ENCODE measurements at regions of chr20 and their contacts with region 1.

Region 1: DNA sequence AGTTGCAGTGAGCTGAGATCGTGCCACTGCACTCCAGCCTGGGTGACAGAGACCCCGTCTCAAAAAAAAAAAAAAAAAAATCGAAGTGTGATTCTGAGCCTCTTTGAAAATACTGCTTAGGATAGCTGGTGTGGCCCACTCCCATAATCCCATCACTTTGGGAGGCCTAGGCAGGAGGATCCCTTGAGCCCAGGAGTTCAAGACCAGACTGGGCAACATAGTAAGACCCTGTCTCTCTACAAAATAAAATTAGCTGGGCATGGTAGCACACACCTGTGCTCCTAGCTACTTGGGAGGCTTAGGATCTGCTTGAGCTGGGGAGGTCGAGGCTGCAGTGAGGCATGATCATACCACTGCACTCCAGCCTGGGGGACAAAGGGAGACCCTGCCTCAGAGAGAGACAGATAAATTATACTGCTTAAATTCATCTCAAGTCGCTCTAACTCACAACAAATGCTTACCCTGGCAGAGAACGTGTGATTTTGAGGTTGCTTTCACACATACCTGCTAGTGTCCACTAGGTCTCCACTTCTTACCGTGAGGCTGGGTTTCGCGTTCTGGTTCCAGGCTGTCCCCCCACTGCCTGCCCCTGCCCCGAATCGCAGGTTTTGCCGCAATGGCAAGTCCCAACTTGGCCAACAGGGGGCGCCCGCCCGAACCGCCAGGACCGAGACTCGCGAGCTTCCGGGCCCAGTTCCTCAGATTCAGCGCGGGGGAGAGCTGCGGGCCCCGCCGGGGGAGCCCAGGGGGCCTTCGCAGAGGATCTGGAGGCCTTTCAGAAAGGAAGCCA is 12.3 kb upstream of the TMC2 start:
- DNase-seq: peak; percentile 85 to 94 (median 88)
- ATAC-seq: peak; percentile 66 to 84 (median 78)
- H3K4me3 ChIP-seq: peak overlapping the region; percentile 62 to 96 (median 80)
- H3K27ac ChIP-seq: peak overlapping the region; percentile 58 to 97 (median 89)
- H3K4me1 ChIP-seq: peaks cover 0 to 40% (median 4%) of the 10 kb centered on the region in 12 donors
- H3K27me3 ChIP-seq: no peaks in the 10 kb centered on the region
- CTCF ChIP-seq: peak; percentile 93 to 99 (median 96)
- POLR2A ChIP-seq: peak in 1 of 2 donors; percentile 62

Region 2: DNA sequence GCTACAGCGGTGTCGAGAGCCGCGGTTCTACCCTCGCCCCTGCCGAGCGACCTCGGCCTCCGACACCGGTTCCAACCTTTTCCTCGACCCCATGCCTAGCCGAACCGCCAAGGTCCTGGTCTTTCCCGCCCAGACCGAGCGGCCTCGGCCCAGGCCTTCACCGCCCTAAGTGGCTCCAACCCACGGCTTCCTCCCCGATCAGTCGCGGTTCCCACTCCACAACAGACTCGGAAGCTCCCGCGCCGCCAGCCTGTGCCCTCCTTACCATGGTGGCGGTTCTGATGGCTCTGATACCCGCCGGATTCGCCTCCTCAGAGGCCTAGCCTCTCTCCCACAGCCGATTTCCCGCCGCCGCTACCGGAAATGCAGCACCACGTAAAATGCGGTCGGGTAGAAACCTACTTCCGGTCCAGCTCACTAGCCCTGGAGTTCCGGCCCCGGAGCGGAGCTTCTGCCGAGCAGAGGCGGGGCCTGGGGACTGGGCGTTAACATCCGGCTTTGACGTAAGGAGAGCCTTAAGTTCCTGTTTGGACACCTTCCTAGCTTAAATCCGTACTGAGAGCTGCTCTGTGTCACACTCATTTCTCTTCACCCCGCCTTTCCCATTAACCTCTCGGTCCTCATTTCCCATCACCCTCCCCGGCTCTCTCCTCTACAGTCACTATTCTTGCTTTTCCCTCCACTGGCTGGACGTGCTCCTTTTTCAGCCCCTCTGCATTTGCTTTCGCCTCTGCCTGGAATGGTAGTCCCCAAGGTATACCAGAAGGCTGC is 53.5 kb before region 1 on chr20 and contains the start of gene SNRPB:
- intact Hi-C with region 1: loop called in 3 of 10 experiments (anchors 1 to 5 kb)
- DNase-seq: peak; percentile 96 to 97 (median 97)
- ATAC-seq: peak; percentile 98 to 99 (median 99)
- H3K4me3 ChIP-seq: peak within 1 kb of the TSS; percentile 69 to 94 (median 76)
- H3K27ac ChIP-seq: peak within 1 kb of the TSS; percentile 65 to 95 (median 92)
- H3K4me1 ChIP-seq: peaks cover 0 to 35% (median 16%) of the 10 kb centered on the region in 12 donors
- H3K27me3 ChIP-seq: no peaks in the 10 kb centered on the region
- CTCF ChIP-seq: no peak
- POLR2A ChIP-seq: peak; percentile 81 to 97
- total RNA-seq, gene SNRPB: 36.8 to 132 (median 75.5) TPM

Region 3: GRCh38 chr20:2643708-2644107 is 119.6 kb after region 1 on chr20:
- intact Hi-C with region 1: loop called in 9 of 10 experiments (anchors 2 to 10 kb)
- DNase-seq: no peak
- ATAC-seq: no peak
- H3K4me3 ChIP-seq: no peak overlapping the region
- H3K27ac ChIP-seq: no peak overlapping the region
- H3K4me1 ChIP-seq: peaks cover 0 to 3% (median 0%) of the 10 kb centered on the region in 12 donors
- H3K27me3 ChIP-seq: no peaks in the 10 kb centered on the region
- CTCF ChIP-seq: no peak
- POLR2A ChIP-seq: no peak

Region 4: DNA sequence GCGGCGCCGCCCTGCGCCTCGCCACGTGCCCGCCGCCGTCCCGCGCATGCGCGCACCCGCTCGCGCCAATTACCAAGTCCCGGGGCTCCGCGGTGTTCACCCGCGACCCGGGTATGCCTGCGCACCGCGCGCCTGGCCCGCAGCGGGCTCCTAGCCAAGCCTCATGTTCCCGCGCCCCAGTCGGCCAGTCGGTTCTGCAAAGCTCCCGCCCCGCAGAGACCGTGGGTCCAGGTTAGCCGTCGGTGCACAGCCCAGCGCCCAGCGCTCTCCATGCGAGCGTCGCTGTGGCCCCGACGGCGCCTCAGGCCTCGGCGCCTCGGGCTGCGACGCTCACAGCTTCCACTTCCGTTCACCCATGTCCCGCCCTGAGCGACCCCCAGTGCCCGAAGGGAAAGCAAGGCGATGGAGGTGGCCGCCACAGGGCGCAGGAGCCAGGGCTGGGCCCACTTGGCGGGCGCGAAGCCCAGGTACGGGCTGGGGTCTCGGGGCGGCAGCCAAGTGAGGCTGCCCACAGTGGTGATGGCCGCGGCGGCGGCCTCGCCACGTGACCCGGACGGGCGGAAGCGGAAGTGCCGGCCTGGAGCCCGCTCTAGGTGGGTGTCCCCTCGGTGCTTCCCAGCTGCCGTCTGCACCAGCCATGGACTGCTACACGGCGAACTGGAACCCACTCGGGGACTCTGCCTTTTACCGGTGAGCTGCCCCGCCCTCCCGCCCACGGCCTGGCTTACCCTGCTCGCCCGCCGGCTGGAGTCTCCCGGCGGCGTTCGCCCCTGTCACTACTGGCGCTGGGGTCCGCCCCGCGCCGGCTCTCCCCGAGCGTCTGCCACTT is 316.2 kb after region 1 on chr20 and contains the starts of genes PCED1A and VPS16:
- intact Hi-C with region 1: loop called in 1 of 10 experiments (anchors 10 kb)
- DNase-seq: peak; percentile 89 to 95 (median 91)
- ATAC-seq: peak; percentile 97 to 99 (median 98)
- H3K4me3 ChIP-seq: peak within 1 kb of the TSS; percentile 70 to 99 (median 91)
- H3K27ac ChIP-seq: peak within 1 kb of the TSS; percentile 69 to 96 (median 87)
- H3K4me1 ChIP-seq: peaks cover 0 to 26% (median 15%) of the 10 kb centered on the region in 12 donors
- H3K27me3 ChIP-seq: no peaks in the 10 kb centered on the region
- CTCF ChIP-seq: no peak
- POLR2A ChIP-seq: peak in 1 of 2 donors; percentile 46
- total RNA-seq, gene PCED1A: 5.0 to 20.7 (median 6.8) TPM
- total RNA-seq, gene VPS16: 13.9 to 28.6 (median 19.5) TPM

Region 5: GRCh38 chr20:3000852-3001523 is 476.9 kb after region 1 on chr20:
- intact Hi-C with region 1: loop called in 2 of 10 experiments (anchors 5 to 10 kb)
- DNase-seq: no peak
- ATAC-seq: peak; percentile 49 to 72 (median 56)
- H3K4me3 ChIP-seq: no peak overlapping the region
- H3K27ac ChIP-seq: no peak overlapping the region
- H3K4me1 ChIP-seq: no peaks in the 10 kb centered on the region
- H3K27me3 ChIP-seq: no peaks in the 10 kb centered on the region
- CTCF ChIP-seq: peak in 10 of 12 donors; percentile 37 to 65 (median 48)
- POLR2A ChIP-seq: no peak

Measured in heart left ventricle (tissue), 16 donors.